Common myeloid progenitor, CD34-positive (primary cell): ENCODE measurements at regions of chr14 and their contacts with region 1.

Region 1: DNA sequence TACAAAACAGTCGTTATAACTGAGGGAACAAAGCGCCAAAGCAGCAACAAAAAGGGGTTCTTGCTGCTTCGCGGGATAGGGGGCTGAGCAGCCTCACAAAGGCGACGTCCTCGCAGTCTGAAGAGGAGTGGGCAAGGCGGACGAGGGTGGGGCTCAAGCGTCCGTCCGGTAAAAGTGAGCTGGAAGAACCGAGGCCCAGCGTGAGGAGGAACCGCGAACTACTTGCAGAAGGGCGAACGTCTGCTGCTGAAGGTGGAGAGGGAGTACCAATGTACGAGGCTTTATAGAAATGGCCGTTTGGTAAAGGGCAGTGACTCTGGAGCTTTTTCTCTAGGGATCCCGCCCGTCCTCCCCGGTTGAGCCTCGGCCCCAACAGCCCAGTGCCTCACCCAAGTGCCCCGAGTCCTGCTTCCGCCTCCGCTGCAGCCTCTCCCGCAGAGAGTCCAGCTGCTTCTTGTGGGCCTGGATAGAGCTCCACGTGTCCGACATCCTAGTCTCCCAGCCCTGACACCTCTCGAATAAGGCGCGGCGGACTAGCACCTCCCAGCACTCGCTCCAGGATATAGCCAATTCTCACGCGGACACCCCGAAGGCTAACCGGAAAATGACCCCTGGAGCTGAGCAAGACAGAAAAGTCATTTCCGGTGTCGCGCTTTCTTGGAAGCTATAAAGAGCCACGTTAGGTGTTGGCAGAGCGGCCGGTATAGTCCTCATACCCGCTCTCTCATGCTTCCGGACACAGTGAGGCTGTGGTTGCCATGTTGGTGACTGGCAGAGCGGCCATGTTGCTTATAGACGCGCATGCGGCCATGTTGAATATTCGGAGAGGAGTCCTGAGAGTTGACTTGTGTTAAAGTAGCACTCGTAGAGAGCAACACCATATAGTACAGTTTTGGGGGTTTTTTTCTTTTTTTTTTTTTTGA is at the start of gene METTL3:
- DNase-seq: peak; percentile 95 to 97 (median 97)
- H3K4me3 ChIP-seq: peak within 1 kb of the TSS; percentile 66 to 100 (median 98)
- H3K27ac ChIP-seq: peak within 1 kb of the TSS; percentile 82 to 89
- H3K4me1 ChIP-seq: peaks cover 9 to 24% (median 15%) of the 10 kb centered on the region in 4 experiments
- H3K27me3 ChIP-seq: no peaks in the 10 kb centered on the region

Region 2: GRCh38 chr14:21109377-21110260 is 401.4 kb before region 1 on chr14:
- CTCF ChIA-PET with region 1: no interaction called
- POLR2A ChIA-PET with region 1: no interaction called
- DNase-seq: peak in 1 of 3 donors; percentile 44
- H3K4me3 ChIP-seq: no peak overlapping the region
- H3K27ac ChIP-seq: no peak overlapping the region
- H3K4me1 ChIP-seq: peaks cover 3 to 17% (median 12%) of the 10 kb centered on the region in 4 experiments
- H3K27me3 ChIP-seq: no peaks in the 10 kb centered on the region

Region 3: DNA sequence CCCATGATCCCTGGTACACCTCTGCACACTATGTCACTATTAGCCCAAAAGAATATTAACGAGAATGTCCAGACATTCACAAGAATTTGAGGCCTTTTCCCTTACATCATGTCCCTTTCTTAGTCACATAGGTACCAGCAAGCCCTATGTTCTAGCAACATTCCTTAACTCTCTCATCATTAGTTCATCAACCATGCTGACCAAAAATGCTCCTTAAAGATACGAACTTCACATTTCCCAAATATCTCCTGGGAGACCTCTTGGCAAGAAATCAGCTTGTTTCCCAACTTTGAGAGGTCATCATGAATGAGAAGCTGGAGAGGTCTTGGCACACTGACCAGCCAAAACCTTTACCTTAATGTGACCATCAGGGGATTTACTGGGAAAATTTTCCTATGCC is 10.5 kb after region 1 on chr14:
- CTCF ChIA-PET with region 1: interaction called, 11 read pairs
- POLR2A ChIA-PET with region 1: interaction called, 5 read pairs
- DNase-seq: no peak
- H3K4me3 ChIP-seq: no peak overlapping the region
- H3K27ac ChIP-seq: no peak overlapping the region
- H3K4me1 ChIP-seq: peaks cover 0 to 3% (median 2%) of the 10 kb centered on the region in 4 experiments
- H3K27me3 ChIP-seq: peaks cover 0 to 1% (median 0%) of the 10 kb centered on the region in 5 experiments